Pancreas (tissue), 10 donors: ENCODE measurements at regions of chr5 and their contacts with region 1.

Region 1: DNA sequence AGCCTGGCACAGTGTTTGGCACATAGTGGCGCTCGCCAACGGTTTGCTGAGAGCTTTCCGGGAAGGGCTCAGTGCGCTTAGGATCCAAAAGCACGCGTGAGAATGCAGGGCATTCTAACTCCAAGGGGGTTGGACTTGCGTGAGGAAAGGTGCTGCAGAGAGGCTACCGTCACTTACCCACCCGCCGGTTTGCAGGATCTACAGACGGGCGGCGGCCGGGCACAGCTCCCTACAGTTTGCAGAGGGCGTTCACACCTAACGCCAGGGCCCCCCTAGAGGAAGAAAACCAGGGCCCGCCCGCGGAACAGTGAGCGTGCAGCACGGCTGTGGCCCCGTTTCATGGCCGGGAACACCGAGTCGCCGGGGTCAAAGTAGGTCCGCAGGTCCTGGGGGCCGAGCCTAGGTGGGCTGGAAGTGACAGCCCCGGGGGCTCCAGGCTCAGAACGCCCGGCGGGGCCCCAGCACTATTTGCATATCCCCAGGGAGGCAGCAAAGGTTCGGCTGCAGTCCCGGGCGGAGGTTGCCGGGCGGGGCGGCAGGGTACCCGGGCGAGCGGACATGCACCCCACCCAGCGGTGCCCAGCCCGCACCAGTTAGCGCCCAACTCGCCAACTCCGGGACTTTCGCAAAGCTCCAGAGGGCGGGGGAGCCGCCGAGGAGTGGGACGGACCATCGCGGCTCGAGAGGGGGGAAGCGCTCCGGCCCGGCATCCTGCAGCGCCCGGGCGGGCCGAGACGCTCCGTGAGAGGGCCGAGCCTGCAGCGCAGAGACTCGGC is 526 bp upstream of the GALNT10 start:
- DNase-seq: peak; percentile 82 to 95 (median 88)
- ATAC-seq: peak; percentile 95 to 98 (median 96)
- H3K4me3 ChIP-seq: peak overlapping the region; percentile 52 to 91 (median 58)
- H3K27ac ChIP-seq: peak overlapping the region; percentile 45 to 72 (median 68)
- H3K4me1 ChIP-seq: peaks cover 0 to 4% (median 0%) of the 10 kb centered on the region in 3 donors
- H3K27me3 ChIP-seq: no peaks in the 10 kb centered on the region
- CTCF ChIP-seq: peak in 2 of 4 donors; percentile 14 to 27

Region 2: GRCh38 chr5:153974131-153974812 is 215.7 kb before region 1 on chr5:
- intact Hi-C with region 1: loop called in 1 of 3 experiments (anchors 10 kb)
- DNase-seq: peak in 1 of 6 donors; percentile 31
- ATAC-seq: peak in 3 of 4 donors; percentile 64 to 77 (median 70)
- H3K4me3 ChIP-seq: no peak overlapping the region
- H3K27ac ChIP-seq: no peak overlapping the region
- H3K4me1 ChIP-seq: no peaks in the 10 kb centered on the region
- H3K27me3 ChIP-seq: no peaks in the 10 kb centered on the region
- CTCF ChIP-seq: peak; percentile 35 to 53 (median 52)

Region 3: DNA sequence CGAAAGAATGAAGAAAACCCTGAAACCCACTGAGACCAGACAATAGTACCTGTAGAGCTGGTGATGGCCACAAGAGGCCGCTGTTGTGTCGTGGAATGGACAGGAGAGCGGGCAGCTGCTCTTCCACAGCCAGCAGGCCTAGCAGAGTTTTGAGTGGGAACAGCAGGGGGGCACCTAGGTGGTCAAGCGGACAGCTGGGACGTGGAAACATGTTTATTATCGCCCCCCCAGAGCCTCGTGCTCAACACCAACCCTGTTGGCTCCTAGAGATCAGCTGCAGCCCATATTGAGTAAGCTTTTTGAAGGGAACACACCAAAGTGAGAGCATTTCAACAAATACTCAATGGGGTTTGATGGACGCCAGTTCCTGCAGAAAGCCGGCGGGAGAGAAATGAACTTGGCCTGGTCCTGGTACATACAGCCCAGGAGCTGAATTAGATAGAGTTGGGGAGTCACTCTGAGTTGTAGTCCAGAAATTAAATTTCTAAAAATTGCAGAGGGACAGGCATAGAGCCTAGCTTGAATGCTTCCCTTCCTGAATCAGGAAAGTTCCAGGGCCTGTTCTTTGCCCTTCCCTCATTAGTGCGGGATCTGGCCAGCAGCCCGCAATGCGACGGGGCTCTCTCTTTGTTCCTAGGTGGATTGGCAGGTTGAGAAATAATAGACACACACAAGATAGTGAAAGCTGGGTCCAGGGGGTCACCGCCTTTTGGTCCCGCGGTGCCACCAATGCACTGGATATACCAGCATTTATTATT is 117.4 kb before region 1 on chr5:
- intact Hi-C with region 1: loop called in 1 of 3 experiments (anchors 10 kb)
- DNase-seq: peak; percentile 48 to 95 (median 83)
- ATAC-seq: peak; percentile 88 to 100 (median 98)
- H3K4me3 ChIP-seq: no peak overlapping the region
- H3K27ac ChIP-seq: no peak overlapping the region
- H3K4me1 ChIP-seq: peaks cover 0 to 5% (median 0%) of the 10 kb centered on the region in 3 donors
- H3K27me3 ChIP-seq: no peaks in the 10 kb centered on the region
- CTCF ChIP-seq: peak; percentile 87 to 92 (median 90)

Region 4: GRCh38 chr5:154405078-154405792 is 215.2 kb after region 1 on chr5:
- intact Hi-C with region 1: loop called in 2 of 3 experiments (anchors 10 kb)
- DNase-seq: peak; percentile 60 to 91 (median 79)
- ATAC-seq: peak; percentile 96 to 100 (median 99)
- H3K4me3 ChIP-seq: peak overlapping the region in 2 of 4 donors; percentile 28 to 41
- H3K27ac ChIP-seq: no peak overlapping the region
- H3K4me1 ChIP-seq: peaks cover 0 to 3% (median 0%) of the 10 kb centered on the region in 3 donors
- H3K27me3 ChIP-seq: no peaks in the 10 kb centered on the region
- CTCF ChIP-seq: peak; percentile 64 to 85 (median 82)